IMR-90 (cell line): ENCODE measurements at regions of chr19 and their contacts with region 1.

Region 1: GRCh38 chr19:344625-345319 is at the start of gene MIER2:
- DNase-seq: peak; percentile 68
- ATAC-seq: peak; percentile 94
- H3K4me3 ChIP-seq: peak within 1 kb of the TSS; percentile 83
- H3K27ac ChIP-seq: peak within 1 kb of the TSS; percentile 68
- H3K4me1 ChIP-seq: peaks cover 18% of the 10 kb centered on the region
- H3K27me3 ChIP-seq: no peaks in the 10 kb centered on the region
- CTCF ChIP-seq: no peak
- POLR2A ChIP-seq: peak; percentile 64
- RAD21 ChIP-seq: no peak
- total RNA-seq, gene MIER2: 11.4 and 28.0 TPM in 2 replicates

Region 2: DNA sequence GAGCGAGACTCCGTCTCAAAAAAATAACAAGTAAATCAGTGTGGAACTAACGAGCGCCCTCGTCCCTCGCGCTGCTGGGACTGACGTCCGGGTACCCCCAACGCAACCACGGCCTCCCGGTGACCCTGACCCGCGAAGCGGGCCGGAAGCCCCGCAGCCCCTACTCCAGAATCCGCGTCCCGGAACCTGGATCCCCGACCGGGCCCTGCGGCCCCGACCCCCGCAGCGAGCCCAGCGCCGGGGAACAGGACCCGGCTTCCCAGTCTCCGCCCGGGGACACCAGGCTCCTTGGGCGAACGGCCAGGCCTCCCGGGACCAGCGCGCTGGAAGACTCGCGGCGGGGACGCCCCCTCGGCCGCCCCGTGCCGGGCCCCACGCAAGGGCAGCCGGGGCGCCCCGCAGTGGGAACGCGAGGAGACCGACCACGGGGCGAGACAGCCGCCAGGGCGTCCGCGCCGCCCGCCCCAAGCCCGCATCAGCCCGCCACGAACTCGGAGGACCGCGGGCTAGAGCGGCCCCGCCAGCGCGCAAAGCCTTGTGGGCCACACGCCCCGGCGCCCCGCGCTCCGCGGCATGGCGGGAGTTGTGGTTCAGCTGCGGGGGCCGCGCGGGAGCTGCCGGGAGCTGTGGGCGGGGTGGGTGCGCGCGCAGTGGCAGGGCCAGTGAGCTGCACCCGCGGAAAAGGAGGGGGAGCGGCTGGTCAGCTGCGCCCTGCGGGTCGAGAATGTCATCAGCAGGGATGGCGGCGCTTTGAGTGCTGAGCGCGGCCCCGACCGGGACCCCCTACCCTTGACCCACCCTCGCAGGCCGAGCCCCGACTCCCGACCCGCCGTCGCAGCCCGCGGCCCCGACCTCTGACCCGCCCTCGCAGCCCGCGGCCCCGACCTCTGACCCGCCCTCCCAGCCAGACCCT is 144.0 kb after region 1 on chr19:
- CTCF ChIA-PET with region 1: no interaction called
- POLR2A ChIA-PET with region 1: no interaction called
- dilution Hi-C with region 1: no loop called
- in situ Hi-C with region 1: no loop called
- intact Hi-C with region 1: loop called (anchors 10 kb)
- DNase-seq: peak; percentile 92
- ATAC-seq: peak; percentile 96
- H3K4me3 ChIP-seq: peak overlapping the region; percentile 85
- H3K27ac ChIP-seq: peak overlapping the region; percentile 76
- H3K4me1 ChIP-seq: peaks cover 4% of the 10 kb centered on the region; the same call in 1 of the 2 replicates
- H3K27me3 ChIP-seq: peaks cover 8% of the 10 kb centered on the region; the same call in 1 of the 2 replicates
- CTCF ChIP-seq: 0 out of 2 replicates have a peak, but pooled peaks have one; percentile 2
- POLR2A ChIP-seq: peak; percentile 54; the same call in 1 of the 2 replicates
- RAD21 ChIP-seq: no peak